ENCODE measurements at regions of chr14 and their contacts with region 1.

Region 1: DNA sequence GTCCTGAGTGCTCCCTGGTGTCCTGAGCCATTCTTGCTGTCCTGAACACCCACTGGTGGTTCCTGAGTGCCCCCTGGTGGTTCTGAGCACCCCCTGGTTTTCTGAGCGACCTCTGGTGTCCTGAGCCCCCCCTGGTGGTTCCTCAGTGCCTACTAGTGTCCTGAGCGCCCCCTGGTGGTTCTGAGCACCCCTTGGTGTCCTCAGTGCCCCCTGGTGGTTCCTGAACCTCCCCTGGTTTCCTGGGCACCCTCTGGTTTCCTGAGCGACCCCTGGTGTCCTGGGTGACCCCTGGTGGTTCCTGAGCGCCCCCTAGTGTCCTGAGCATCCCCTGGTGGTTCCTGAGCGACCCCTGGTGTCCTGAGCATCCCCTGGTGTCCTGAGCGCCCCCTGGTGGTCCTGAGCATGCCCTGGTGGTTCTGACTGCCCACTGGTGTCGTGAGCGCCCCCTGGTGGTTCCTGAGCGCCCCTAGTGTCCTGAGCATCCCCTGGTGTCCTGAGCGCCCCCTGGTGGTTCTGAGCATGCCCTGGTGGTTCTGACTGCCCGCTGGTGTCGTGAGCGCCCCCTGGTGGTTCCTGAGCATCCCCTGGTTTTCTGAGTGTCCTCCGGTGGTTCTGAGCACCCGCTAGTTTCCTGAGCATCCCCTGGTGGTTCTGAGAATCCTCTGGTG is 473.1 kb downstream of the TMEM121 start:
- DNase-seq: peak; percentile 49 to 73 (median 66)
- H3K4me3 ChIP-seq: no peak overlapping the region
- H3K4me3 Mint-ChIP-seq: no peak overlapping the region
- H3K27ac ChIP-seq: no peak overlapping the region
- H3K27ac Mint-ChIP-seq: peak overlapping the region in 5 of 7 donors; percentile 18 to 87 (median 70)
- H3K4me1 ChIP-seq: peaks cover 45% of the 10 kb centered on the region
- H3K4me1 Mint-ChIP-seq: peaks cover 26 to 49% (median 36%) of the 10 kb centered on the region in 4 donors
- H3K27me3 ChIP-seq: no peaks in the 10 kb centered on the region
- H3K27me3 Mint-ChIP-seq: no peaks in the 10 kb centered on the region

Region 2: DNA sequence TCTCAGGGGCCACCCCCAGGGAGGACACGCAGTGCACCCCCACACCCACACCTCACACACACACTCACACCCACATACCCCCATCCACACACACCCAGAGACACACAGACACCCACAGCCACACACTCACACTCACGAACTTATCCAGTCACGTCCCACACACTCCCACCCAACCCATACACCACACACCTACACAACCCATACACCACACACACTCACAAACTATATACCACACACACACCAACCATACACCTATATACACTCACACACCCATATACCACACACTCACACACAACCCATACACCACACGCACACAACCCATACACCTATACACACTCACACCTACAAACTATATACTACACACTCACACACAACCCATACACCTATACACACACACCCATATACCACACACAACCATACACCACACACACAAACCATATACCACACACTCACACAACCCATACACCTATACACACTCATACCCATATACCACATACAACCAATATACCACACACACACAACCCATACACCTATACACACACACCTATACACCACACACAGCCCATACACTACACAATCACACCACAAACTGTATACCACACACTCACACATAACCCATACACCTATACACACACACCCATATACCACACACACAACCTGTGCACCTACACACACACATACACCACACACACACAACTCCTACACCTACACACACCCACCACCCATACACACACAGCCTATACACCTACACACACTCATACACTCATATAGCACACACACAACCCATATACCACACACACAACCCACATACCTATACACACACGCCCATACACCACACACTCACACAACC is 430.4 kb before region 1 on chr14:
- CTCF ChIA-PET with region 1: no interaction called
- POLR2A ChIA-PET with region 1: no interaction called
- intact Hi-C with region 1: no loop called
- DNase-seq: no peak
- H3K4me3 ChIP-seq: no peak overlapping the region
- H3K4me3 Mint-ChIP-seq: no peak overlapping the region
- H3K27ac ChIP-seq: no peak overlapping the region
- H3K27ac Mint-ChIP-seq: peak overlapping the region in 2 of 7 donors; percentile 2 to 5
- H3K4me1 ChIP-seq: no peaks in the 10 kb centered on the region
- H3K4me1 Mint-ChIP-seq: peaks cover 0 to 5% (median 1%) of the 10 kb centered on the region in 4 donors
- H3K27me3 ChIP-seq: no peaks in the 10 kb centered on the region
- H3K27me3 Mint-ChIP-seq: peaks cover 0 to 3% of the 10 kb centered on the region in 2 donors

Region 3: DNA sequence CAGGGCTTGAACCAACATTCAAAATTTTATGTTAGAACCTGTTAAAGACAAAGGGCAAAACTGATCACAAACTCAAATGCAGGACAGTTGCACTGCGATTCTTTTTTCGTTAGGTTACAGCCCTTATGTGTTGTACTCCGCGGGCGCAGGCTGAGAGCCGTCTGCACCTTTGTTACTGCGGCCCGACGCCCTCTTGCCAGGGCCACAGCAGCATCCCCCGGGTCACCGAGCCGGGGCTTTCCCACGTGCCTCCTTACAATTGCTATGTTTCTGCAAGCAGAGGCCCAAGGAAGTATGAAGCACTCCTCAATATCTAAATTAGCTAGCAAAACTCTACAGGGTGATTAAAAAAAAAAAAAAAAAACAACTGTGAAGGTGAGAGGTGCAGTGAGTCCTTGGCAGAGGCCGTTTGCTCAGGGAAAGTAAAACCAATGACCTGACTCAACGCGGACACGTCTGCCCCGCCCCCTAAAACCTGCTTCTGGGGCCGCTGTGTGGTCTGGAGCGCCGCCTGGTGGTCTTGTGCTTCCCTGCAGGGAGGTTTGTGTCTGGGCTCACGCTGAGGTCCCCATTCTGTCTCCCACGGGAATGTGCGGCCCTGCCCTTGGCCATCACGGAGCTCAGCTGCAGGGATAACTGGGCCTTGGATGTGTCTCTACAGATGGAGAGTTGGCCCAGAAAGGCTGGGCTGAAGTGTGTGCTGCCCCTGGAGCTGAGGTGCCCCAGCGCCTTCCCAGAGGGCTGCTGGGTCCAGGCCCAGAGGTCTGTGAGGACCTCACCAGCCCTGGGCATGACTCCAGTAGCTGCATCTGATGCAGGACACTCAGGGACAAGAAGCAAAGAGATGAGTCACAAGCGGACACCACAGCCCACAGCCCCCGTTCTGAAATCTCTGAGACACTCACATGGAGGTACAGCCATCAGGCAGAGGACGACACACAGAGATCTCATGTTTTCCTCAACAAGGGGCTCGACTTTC is 54.6 kb before region 1 on chr14:
- CTCF ChIA-PET with region 1: interaction called, 13 read pairs
- POLR2A ChIA-PET with region 1: no interaction called
- intact Hi-C with region 1: no loop called
- DNase-seq: peak; percentile 51 to 64 (median 55)
- H3K4me3 ChIP-seq: no peak overlapping the region
- H3K4me3 Mint-ChIP-seq: peak overlapping the region in 2 of 8 donors; percentile 32 to 43
- H3K27ac ChIP-seq: no peak overlapping the region
- H3K27ac Mint-ChIP-seq: peak overlapping the region in 1 of 7 donors; percentile 4
- H3K4me1 ChIP-seq: peaks cover 15% of the 10 kb centered on the region
- H3K4me1 Mint-ChIP-seq: peaks cover 4 to 16% (median 13%) of the 10 kb centered on the region in 4 donors
- H3K27me3 ChIP-seq: no peaks in the 10 kb centered on the region
- H3K27me3 Mint-ChIP-seq: peaks cover 0 to 10% of the 10 kb centered on the region in 2 donors

Region 4: GRCh38 chr14:105974902-105975301 is 24.6 kb before region 1 on chr14:
- CTCF ChIA-PET with region 1: interaction called, 23 read pairs
- POLR2A ChIA-PET with region 1: no interaction called
- intact Hi-C with region 1: loop called (anchors 1 kb)
- DNase-seq: peak; percentile 29 to 50 (median 38)
- H3K4me3 ChIP-seq: no peak overlapping the region
- H3K4me3 Mint-ChIP-seq: no peak overlapping the region
- H3K27ac ChIP-seq: no peak overlapping the region
- H3K27ac Mint-ChIP-seq: peak overlapping the region in 2 of 7 donors; percentile 25 to 26
- H3K4me1 ChIP-seq: no peaks in the 10 kb centered on the region
- H3K4me1 Mint-ChIP-seq: peaks cover 0 to 8% (median 5%) of the 10 kb centered on the region in 4 donors
- H3K27me3 ChIP-seq: peaks cover 9% of the 10 kb centered on the region
- H3K27me3 Mint-ChIP-seq: peaks cover 5 to 17% of the 10 kb centered on the region in 2 donors

Region 5: DNA sequence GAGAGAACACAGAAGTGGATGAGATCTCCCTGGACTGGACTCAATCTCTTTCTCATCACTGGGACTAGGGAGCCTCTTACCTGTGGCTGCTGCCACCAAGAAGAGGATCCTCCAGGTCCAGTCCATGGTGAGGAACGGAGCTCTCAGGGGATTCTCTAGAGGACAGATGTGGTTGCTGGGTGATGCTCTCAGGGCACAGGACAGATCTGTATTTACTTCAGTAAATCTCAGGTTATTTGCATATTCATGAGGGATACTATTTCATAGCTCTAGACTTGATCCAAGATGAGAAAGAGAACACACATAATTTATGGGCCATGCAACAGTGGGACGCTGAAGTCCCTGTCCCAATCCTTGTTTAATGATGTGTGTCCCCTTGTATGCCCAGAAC is 12.6 kb before region 1 on chr14:
- CTCF ChIA-PET with region 1: interaction called, 21 read pairs
- POLR2A ChIA-PET with region 1: interaction called, 4 read pairs
- intact Hi-C with region 1: no loop called
- DNase-seq: no peak
- H3K4me3 ChIP-seq: no peak overlapping the region
- H3K4me3 Mint-ChIP-seq: peak overlapping the region in 7 of 8 donors; percentile 45 to 79 (median 74)
- H3K27ac ChIP-seq: peak overlapping the region; percentile 9
- H3K27ac Mint-ChIP-seq: peak overlapping the region; percentile 82 to 94 (median 91)
- H3K4me1 ChIP-seq: peaks cover 61% of the 10 kb centered on the region
- H3K4me1 Mint-ChIP-seq: peaks cover 49 to 72% (median 60%) of the 10 kb centered on the region in 4 donors
- H3K27me3 ChIP-seq: no peaks in the 10 kb centered on the region
- H3K27me3 Mint-ChIP-seq: no peaks in the 10 kb centered on the region